A673 (cell line): ENCODE measurements at regions of chr21 and their contacts with region 1.

Region 1: DNA sequence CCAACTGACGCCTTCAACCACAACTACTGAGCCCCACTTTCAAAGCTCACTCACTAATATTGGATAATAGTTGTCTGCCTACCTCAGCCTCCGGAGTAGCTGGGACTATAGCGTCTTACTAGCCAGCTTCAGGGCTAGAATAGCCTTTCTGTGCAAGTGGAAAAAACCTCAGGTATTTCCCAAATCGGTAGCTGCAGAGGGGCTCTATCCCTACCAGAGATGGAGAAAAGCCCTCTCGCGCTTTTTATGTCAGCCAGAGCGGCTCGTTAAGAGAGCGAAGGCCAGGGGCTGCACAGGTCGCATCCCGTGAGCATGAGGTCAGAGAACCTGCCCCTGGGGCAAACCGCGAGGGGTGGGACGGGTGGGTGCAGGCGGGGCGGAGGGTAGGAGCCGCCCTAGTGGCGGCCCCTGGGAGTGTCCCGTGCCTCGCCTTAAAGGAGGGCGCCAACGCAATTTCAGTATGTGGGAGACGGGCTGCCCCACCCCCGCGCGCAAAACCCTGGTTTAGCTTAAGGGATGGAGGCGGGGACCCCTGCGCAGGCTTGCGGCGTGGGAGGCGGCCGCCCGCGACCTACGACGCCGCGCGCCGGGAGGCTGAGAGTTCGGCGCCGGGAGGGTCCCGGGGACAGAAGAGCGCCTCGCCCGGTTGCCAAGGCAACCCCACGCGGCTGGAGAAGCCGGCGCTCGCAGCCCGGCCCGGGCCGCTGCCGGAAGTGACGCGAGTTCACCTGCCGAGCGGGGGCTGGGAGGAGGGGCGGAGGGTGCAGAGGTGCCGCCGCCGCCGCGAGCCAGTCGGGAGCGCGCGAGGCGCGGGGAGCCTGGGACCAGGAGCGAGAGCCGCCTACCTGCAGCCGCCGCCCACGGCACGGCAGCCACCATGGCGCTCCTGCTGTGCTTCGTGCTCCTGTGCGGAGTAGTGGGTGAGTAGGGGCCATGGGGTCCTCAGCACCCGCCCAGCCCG is at the start of gene CXADR:
- DNase-seq: peak; percentile 83
- H3K4me3 ChIP-seq: peak within 1 kb of the TSS; percentile 83
- H3K27ac ChIP-seq: peak within 1 kb of the TSS; percentile 70
- H3K4me1 ChIP-seq: peaks cover 11% of the 10 kb centered on the region
- H3K27me3 ChIP-seq: no peaks in the 10 kb centered on the region
- CTCF ChIP-seq: peak; percentile 53
- total RNA-seq, gene CXADR: 15.2 and 17.7 TPM in 2 replicates

Region 2: GRCh38 chr21:17441370-17441769 is 71.2 kb before region 1 on chr21:
- CTCF ChIA-PET with region 1: no interaction called
- POLR2A ChIA-PET with region 1: no interaction called
- intact Hi-C with region 1: no loop called
- DNase-seq: no peak
- H3K4me3 ChIP-seq: no peak overlapping the region
- H3K27ac ChIP-seq: no peak overlapping the region
- H3K4me1 ChIP-seq: no peaks in the 10 kb centered on the region
- H3K27me3 ChIP-seq: no peaks in the 10 kb centered on the region
- CTCF ChIP-seq: no peak

Region 3: GRCh38 chr21:17454315-17455027 is 58.1 kb before region 1 on chr21:
- CTCF ChIA-PET with region 1: no interaction called
- POLR2A ChIA-PET with region 1: no interaction called
- intact Hi-C with region 1: loop called (anchors 2 kb)
- DNase-seq: peak; percentile 92
- H3K4me3 ChIP-seq: peak overlapping the region; percentile 39
- H3K27ac ChIP-seq: peak overlapping the region; percentile 15
- H3K4me1 ChIP-seq: no peaks in the 10 kb centered on the region
- H3K27me3 ChIP-seq: no peaks in the 10 kb centered on the region
- CTCF ChIP-seq: no peak